OCI-LY7 (cell line): ENCODE measurements at regions of chr4 and their contacts with region 1.

Region 1: GRCh38 chr4:54058171-54058570 is 6.2 kb downstream of the CHIC2 start:
- DNase-seq: peak; percentile 38
- H3K4me3 ChIP-seq: peak overlapping the region; percentile 51
- H3K27ac ChIP-seq: peak overlapping the region; percentile 69
- H3K4me1 ChIP-seq: peaks cover 73% of the 10 kb centered on the region
- CTCF ChIP-seq: no peak

Region 2: DNA sequence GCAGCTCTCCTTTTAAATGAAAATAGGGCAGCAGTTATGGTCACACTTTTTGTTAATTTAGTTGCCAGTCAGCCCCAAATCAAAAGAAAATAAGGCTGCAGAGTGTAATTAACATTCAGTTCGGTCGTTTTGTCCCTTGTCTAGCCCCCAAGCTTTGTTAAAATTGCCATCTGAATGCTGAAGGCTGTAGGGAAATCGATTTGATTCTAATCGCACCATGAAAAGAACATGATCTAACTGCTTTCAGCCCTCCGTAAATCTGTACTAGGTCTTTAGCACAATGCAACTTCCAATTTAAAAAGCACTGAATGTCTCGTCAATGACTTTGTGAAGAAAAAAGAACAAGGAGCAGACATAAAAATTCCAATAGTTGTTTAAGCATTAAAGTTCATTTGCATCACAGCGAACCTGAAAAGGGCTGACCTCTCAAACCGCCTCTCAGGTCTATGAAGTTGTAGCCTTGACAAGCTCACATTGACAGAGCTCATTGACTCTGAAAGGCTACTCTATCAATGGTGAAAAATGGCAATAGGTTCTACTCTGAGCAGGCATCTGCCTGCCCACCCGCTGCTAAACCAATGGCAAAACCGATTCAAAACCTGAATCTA is 42.6 kb before region 1 on chr4:
- CTCF ChIA-PET with region 1: no interaction called
- POLR2A ChIA-PET with region 1: interaction called, 63 read pairs
- intact Hi-C with region 1: loop called (anchors 2 kb)
- DNase-seq: peak; percentile 23
- H3K4me3 ChIP-seq: peak overlapping the region; percentile 17
- H3K27ac ChIP-seq: peak overlapping the region; percentile 87
- H3K4me1 ChIP-seq: peaks cover 79% of the 10 kb centered on the region
- CTCF ChIP-seq: no peak

Region 3: DNA sequence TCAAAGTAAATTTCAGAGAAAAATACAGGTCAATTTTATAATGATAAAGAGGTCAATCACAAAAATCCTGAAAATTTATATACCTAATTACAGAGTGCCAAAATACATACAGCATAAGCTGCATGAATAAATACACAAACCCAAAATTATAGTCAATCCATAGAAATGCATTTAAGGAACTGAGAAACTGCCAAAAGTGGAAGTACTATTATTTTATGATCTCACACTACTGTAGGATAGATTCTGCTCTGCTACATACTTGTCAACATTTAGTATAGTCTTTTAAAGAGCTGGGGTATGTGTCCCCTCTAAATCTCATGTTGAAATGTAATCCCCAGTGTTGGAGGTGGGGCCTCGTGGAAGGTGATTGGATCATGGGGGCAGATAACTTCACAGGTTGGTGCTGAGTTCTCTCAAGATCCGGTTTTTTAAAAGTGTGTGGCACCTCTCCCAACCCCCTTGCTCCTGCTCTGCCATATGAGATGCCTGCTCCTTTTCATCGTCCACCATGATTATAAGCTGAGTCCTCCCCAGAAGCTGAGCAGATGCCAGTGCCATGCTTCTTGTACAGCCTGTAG is 25.5 kb before region 1 on chr4:
- CTCF ChIA-PET with region 1: no interaction called
- POLR2A ChIA-PET with region 1: interaction called, 34 read pairs
- intact Hi-C with region 1: no loop called
- DNase-seq: peak; percentile 41
- H3K4me3 ChIP-seq: peak overlapping the region; percentile 39
- H3K27ac ChIP-seq: peak overlapping the region; percentile 85
- H3K4me1 ChIP-seq: peaks cover 44% of the 10 kb centered on the region
- CTCF ChIP-seq: no peak